Aorta (tissue), 5 donors: ENCODE measurements at regions of chr7 and their contacts with region 1.

Region 1: GRCh38 chr7:74379938-74380337 is 73.8 kb upstream of the GTF2IRD1 start:
- DNase-seq: peak in 1 of 2 donors; percentile 68
- ATAC-seq: peak; percentile 85
- H3K4me3 ChIP-seq: no peak overlapping the region
- H3K27ac ChIP-seq: no peak overlapping the region
- H3K4me1 ChIP-seq: peaks cover 0 to 3% of the 10 kb centered on the region in 2 donors
- H3K27me3 ChIP-seq: no peaks in the 10 kb centered on the region

Region 2: DNA sequence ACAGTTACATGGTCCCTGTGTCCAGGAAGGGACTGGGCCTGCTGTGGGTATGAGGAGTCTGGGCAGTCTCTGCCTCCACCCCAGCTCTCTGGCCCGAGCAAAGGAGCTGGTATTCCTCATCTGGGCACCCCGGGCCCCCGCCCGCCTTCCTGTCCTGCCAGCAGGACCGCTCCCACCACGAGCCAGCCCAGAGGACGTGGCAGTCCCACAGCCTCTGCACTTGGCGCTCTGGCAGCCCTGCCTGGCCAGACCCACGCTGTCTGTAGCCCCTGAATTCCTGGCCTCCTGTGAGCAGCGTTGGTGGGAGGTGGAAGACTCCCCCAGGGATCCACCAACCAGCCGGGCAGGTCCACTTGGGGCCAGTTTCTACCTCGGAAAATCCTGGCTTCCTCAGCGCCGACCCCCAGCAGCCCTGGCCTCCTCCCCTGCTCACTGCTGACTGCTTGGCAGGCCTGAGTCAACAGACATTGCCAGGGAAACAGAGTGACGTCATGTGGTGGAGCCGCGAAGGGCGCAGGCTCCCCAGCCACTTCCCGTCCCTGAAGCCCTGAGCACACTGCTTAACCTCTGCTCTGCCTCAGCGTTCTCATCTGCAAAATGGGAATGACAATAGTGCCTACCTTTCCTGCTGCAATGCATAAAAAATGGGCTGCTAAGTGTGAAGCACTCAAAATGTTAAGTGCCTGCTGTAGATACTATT is 317.9 kb before region 1 on chr7:
- intact Hi-C with region 1: loop called in 1 of 2 experiments (anchors 10 kb)
- DNase-seq: peak; percentile 94 to 95
- ATAC-seq: peak; percentile 92
- H3K4me3 ChIP-seq: no peak overlapping the region
- H3K27ac ChIP-seq: peak overlapping the region in 1 of 2 donors; percentile 88
- H3K4me1 ChIP-seq: no peaks in the 10 kb centered on the region
- H3K27me3 ChIP-seq: no peaks in the 10 kb centered on the region

Region 3: DNA sequence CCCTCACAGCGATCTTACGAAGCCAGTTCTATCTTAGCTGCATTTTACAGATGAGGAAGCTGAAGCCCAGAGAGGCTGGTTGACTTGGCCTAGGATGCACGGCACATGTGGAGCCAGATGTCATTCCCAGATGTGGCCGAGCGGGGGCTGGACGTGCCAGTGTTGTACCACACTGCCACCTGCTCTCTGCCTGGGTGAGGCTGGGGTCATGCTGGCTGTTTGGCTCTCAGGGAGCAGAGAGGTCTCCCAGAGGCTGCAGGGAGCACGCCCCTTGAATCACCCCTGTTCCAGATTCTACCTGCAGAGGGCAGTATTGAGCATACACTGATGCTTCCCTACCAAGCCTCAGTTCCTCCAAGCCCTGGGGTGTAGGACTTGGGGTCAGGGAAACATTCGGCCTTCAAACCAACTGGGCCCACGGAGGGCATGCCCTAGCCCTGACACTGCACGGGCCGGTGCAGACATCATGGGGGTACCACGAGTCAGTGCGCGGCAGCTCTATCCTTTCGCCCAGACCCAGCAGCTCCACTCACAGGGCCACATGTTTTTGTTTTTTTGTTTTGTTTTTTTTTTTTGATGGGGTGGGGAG is 70.0 kb after region 1 on chr7:
- intact Hi-C with region 1: no loop called
- DNase-seq: peak in 1 of 2 donors; percentile 55
- ATAC-seq: peak; percentile 49
- H3K4me3 ChIP-seq: no peak overlapping the region
- H3K27ac ChIP-seq: no peak overlapping the region
- H3K4me1 ChIP-seq: no peaks in the 10 kb centered on the region
- H3K27me3 ChIP-seq: no peaks in the 10 kb centered on the region

Region 4: DNA sequence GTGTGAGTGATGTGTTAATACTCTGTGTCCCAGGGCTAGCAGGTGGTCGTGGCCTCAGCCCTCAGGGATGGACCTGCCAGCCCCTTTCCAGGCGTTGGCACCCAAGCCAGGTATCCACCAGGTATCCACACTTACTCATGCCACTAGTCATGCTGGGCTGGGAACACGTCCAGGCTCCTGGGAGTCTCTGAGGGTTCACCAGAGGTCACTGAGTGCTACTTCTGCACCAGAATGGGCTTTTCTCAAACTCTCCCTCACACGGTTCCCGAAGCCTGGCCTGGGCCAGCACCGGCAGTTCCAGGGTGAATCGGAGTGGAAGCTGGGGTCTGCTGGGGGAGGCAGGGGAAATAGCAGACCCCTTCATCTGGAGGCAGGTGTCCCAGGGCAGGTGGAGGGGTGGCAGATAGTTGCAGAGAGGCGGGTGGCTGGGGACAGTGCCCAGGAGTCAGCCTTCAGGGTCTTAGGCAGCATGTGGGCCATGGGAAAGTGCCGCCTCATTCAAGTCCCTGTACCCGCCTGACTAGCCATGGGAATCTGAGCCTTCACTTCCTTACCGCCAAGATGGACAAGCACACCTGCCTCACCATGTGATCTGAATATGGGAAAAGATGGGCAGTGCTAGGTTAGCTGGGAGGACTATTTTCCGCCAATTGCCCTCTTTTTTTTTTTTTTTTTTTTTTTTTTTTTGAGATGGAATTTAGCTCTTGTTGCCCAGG is 182.1 kb after region 1 on chr7:
- intact Hi-C with region 1: no loop called
- DNase-seq: no peak
- ATAC-seq: peak; percentile 44
- H3K4me3 ChIP-seq: no peak overlapping the region
- H3K27ac ChIP-seq: no peak overlapping the region
- H3K4me1 ChIP-seq: no peaks in the 10 kb centered on the region
- H3K27me3 ChIP-seq: no peaks in the 10 kb centered on the region